ENCODE measurements at regions of chr9 and their contacts with region 1.

Region 1: GRCh38 chr9:33452828-33453271 is 5.5 kb upstream of the AQP3 start:
- DNase-seq: peak; percentile 20 to 64 (median 39)
- H3K4me3 ChIP-seq: no peak overlapping the region
- H3K4me3 Mint-ChIP-seq: peak overlapping the region in 5 of 7 donors; percentile 25 to 78 (median 50)
- H3K27ac ChIP-seq: no peak overlapping the region
- H3K27ac Mint-ChIP-seq: peak overlapping the region in 7 of 8 donors; percentile 54 to 95 (median 80)
- H3K4me1 ChIP-seq: peaks cover 52% of the 10 kb centered on the region
- H3K4me1 Mint-ChIP-seq: peaks cover 48 to 65% (median 51%) of the 10 kb centered on the region in 3 donors
- H3K27me3 ChIP-seq: no peaks in the 10 kb centered on the region
- H3K27me3 Mint-ChIP-seq: no peaks in the 10 kb centered on the region

Region 2: GRCh38 chr9:33151007-33151557 is 301.8 kb before region 1 on chr9:
- CTCF ChIA-PET with region 1: no interaction called
- POLR2A ChIA-PET with region 1: no interaction called
- DNase-seq: no peak
- H3K4me3 ChIP-seq: no peak overlapping the region
- H3K4me3 Mint-ChIP-seq: peak overlapping the region in 6 of 7 donors; percentile 2 to 79 (median 69)
- H3K27ac ChIP-seq: no peak overlapping the region
- H3K27ac Mint-ChIP-seq: peak overlapping the region in 6 of 8 donors; percentile 85 to 98 (median 92)
- H3K4me1 ChIP-seq: peaks cover 65% of the 10 kb centered on the region
- H3K4me1 Mint-ChIP-seq: peaks cover 90 to 98% (median 96%) of the 10 kb centered on the region in 3 donors
- H3K27me3 ChIP-seq: no peaks in the 10 kb centered on the region
- H3K27me3 Mint-ChIP-seq: no peaks in the 10 kb centered on the region

Region 3: DNA sequence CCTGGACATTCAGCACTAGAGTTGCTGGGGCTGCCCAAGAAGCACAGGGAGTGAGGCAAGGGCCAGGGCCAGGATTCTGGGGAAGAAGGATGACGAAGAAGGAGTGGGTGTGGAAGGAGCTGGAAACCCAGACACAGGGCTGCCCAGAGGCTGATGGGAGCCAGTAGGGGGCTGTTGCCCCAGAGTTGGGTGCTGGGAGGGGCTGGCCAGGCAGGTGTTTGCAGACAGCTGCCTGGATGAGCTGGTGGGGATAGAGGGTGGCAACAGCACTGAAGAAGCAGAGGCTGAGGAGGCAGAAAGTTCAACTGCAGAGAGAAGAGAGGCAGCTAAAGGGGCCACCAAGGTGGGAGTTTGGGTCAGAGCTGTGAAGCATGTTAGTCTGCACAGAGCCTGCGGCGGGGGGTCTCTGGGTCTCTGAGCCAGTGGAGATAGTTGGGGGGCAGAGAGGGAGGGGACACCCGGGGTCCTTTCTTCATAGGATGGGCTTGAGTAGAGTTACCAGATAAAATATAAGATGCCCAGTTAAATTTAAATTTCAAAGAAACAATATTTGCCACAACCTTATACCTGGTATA is 48.0 kb before region 1 on chr9:
- CTCF ChIA-PET with region 1: interaction called, 35 read pairs
- POLR2A ChIA-PET with region 1: interaction called, 3 read pairs
- DNase-seq: no peak
- H3K4me3 ChIP-seq: no peak overlapping the region
- H3K4me3 Mint-ChIP-seq: no peak overlapping the region
- H3K27ac ChIP-seq: no peak overlapping the region
- H3K27ac Mint-ChIP-seq: peak overlapping the region in 4 of 8 donors; percentile 40 to 76 (median 51)
- H3K4me1 ChIP-seq: no peaks in the 10 kb centered on the region
- H3K4me1 Mint-ChIP-seq: no peaks in the 10 kb centered on the region
- H3K27me3 ChIP-seq: no peaks in the 10 kb centered on the region
- H3K27me3 Mint-ChIP-seq: peaks cover 0 to 4% of the 10 kb centered on the region in 2 donors

Region 4: DNA sequence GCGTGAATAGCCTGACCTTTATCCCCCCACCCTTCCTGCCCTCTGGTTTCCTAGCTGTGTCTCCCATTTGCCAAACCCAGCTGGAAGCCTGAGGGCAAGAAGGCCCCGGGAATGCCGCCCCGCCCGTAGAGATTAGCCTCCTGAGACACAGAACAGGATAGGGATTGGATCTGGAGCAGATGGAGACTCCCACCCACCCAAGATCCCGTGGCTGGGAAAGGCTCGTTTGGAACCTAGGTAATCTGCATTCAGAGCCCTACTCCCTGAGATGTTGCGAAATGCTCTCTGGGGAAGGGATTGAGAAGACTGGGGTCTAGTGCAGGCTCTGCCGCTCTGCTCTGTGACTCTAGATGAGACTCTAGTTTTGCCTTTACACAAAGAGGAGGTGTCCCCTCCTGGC is 16.4 kb before region 1 on chr9:
- CTCF ChIA-PET with region 1: interaction called, 14 read pairs
- POLR2A ChIA-PET with region 1: interaction called, 4 read pairs
- DNase-seq: no peak
- H3K4me3 ChIP-seq: no peak overlapping the region
- H3K4me3 Mint-ChIP-seq: no peak overlapping the region
- H3K27ac ChIP-seq: no peak overlapping the region
- H3K27ac Mint-ChIP-seq: peak overlapping the region in 1 of 8 donors; percentile 56
- H3K4me1 ChIP-seq: no peaks in the 10 kb centered on the region
- H3K4me1 Mint-ChIP-seq: peaks cover 4 to 12% (median 6%) of the 10 kb centered on the region in 3 donors
- H3K27me3 ChIP-seq: no peaks in the 10 kb centered on the region
- H3K27me3 Mint-ChIP-seq: peaks cover 0 to 2% of the 10 kb centered on the region in 2 donors

Region 5: GRCh38 chr9:33442125-33442524 is 10.7 kb before region 1 on chr9:
- CTCF ChIA-PET with region 1: interaction called, 202 read pairs
- POLR2A ChIA-PET with region 1: interaction called, 4 read pairs
- DNase-seq: no peak
- H3K4me3 ChIP-seq: no peak overlapping the region
- H3K4me3 Mint-ChIP-seq: no peak overlapping the region
- H3K27ac ChIP-seq: no peak overlapping the region
- H3K27ac Mint-ChIP-seq: peak overlapping the region in 2 of 8 donors; percentile 59 to 89
- H3K4me1 ChIP-seq: peaks cover 26% of the 10 kb centered on the region
- H3K4me1 Mint-ChIP-seq: peaks cover 31 to 50% (median 34%) of the 10 kb centered on the region in 3 donors
- H3K27me3 ChIP-seq: no peaks in the 10 kb centered on the region
- H3K27me3 Mint-ChIP-seq: no peaks in the 10 kb centered on the region

Region 6: GRCh38 chr9:33473643-33474352 is 20.9 kb after region 1 on chr9 and contains the start of gene NOL6:
- CTCF ChIA-PET with region 1: interaction called, 202 read pairs
- POLR2A ChIA-PET with region 1: interaction called, 7 read pairs
- DNase-seq: peak; percentile 94 to 99 (median 98)
- H3K4me3 ChIP-seq: peak within 1 kb of the TSS; percentile 76
- H3K4me3 Mint-ChIP-seq: peak within 1 kb of the TSS; percentile 88 to 100 (median 99)
- H3K27ac ChIP-seq: peak within 1 kb of the TSS; percentile 45
- H3K27ac Mint-ChIP-seq: peak within 1 kb of the TSS; percentile 64 to 99 (median 97)
- H3K4me1 ChIP-seq: peaks cover 22% of the 10 kb centered on the region
- H3K4me1 Mint-ChIP-seq: peaks cover 26 to 32% (median 31%) of the 10 kb centered on the region in 3 donors
- H3K27me3 ChIP-seq: no peaks in the 10 kb centered on the region
- H3K27me3 Mint-ChIP-seq: no peaks in the 10 kb centered on the region
- total RNA-seq, gene NOL6: 90.8 to 93.0 TPM

Region 7: DNA sequence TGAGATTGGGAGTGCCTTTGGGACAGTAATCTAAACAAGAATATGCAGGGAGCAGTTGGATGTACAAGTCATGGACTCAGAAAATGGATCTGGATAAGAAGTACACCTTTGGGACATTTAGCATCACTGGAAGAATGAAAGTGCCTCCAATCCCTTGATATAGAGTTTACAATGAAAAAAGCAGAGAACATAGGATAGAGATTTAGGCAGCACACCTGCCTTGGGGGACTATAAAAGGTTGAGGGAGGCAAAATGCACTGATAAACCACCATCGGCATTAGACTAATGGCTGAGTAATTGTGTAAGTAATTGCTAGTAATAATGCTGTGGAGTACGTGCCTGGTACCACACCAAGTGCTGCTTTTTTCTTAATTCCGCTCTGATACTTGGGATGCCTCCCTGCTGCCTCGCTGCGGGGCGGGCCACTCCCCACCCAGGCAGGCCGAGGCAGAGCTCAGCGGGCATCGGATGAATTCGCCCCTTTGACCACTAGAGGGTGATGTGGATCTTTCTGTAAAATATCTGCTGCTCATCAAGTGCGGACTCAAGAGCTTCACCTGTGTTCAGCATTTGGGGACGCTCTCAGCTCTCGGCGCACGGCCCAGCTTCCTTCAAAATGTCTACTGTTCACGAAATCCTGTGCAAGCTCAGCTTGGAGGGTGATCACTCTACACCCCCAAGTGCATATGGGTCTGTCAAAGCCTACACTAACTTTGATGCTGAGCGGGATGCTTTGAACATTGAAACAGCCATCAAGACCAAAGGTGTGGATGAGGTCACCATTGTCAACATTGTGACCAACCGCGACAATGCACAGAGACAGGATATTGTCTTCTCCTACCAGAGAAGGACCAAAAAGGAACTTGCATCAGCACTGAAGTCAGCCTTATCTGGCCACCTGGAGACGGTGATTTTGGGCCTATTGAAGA is 171.1 kb after region 1 on chr9:
- CTCF ChIA-PET with region 1: no interaction called
- POLR2A ChIA-PET with region 1: no interaction called
- DNase-seq: peak; percentile 37 to 72 (median 66)
- H3K4me3 ChIP-seq: no peak overlapping the region
- H3K4me3 Mint-ChIP-seq: no peak overlapping the region
- H3K27ac ChIP-seq: no peak overlapping the region
- H3K27ac Mint-ChIP-seq: no peak overlapping the region
- H3K4me1 ChIP-seq: no peaks in the 10 kb centered on the region
- H3K4me1 Mint-ChIP-seq: peaks cover 4 to 5% (median 5%) of the 10 kb centered on the region in 3 donors
- H3K27me3 ChIP-seq: no peaks in the 10 kb centered on the region
- H3K27me3 Mint-ChIP-seq: peaks cover 21 to 43% of the 10 kb centered on the region in 2 donors

Measured in CD8-positive, alpha-beta memory T cell (primary cell).